Psoas muscle (tissue), 8 donors: ENCODE measurements at regions of chr15 and their contacts with region 1.

Region 1: DNA sequence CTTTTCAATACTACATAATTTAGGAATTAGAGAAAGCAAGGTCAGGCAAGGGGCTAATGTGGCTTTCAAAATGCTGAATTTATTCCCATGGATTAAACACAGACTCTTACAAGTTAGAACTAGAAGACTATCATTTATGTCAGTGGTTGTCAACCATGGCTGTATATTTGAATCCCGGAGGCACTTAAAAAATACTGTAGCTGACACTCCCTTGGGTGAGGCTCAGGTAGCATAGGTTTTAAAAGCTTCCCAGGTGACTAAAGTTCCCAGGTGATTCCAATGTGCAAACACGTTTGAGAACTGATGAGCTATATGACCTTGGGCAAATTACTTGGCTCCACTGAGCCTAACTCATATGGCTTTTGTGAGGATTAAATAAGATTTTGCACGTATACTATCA is 29.6 kb downstream of the AAGAB start:
- DNase-seq: no peak
- ATAC-seq: no peak
- H3K4me3 ChIP-seq: no peak overlapping the region
- H3K27ac ChIP-seq: no peak overlapping the region
- H3K4me1 ChIP-seq: no peaks in the 10 kb centered on the region
- H3K27me3 ChIP-seq: no peaks in the 10 kb centered on the region
- CTCF ChIP-seq: no peak

Region 2: GRCh38 chr15:65927545-65927944 is 1297.3 kb before region 1 on chr15:
- intact Hi-C with region 1: no loop called
- DNase-seq: no peak
- ATAC-seq: no peak
- H3K4me3 ChIP-seq: no peak overlapping the region
- H3K27ac ChIP-seq: no peak overlapping the region
- H3K4me1 ChIP-seq: no peaks in the 10 kb centered on the region
- H3K27me3 ChIP-seq: no peaks in the 10 kb centered on the region
- CTCF ChIP-seq: no peak

Region 3: GRCh38 chr15:66072616-66073361 is 1152.1 kb before region 1 on chr15:
- intact Hi-C with region 1: no loop called
- DNase-seq: no peak
- ATAC-seq: peak; percentile 33 to 77 (median 52)
- H3K4me3 ChIP-seq: no peak overlapping the region
- H3K27ac ChIP-seq: no peak overlapping the region
- H3K4me1 ChIP-seq: no peaks in the 10 kb centered on the region
- H3K27me3 ChIP-seq: no peaks in the 10 kb centered on the region
- CTCF ChIP-seq: no peak

Region 4: GRCh38 chr15:66951531-66952320 is 273.2 kb before region 1 on chr15:
- intact Hi-C with region 1: loop called in 1 of 2 experiments (anchors 5 kb)
- DNase-seq: no peak
- ATAC-seq: no peak
- H3K4me3 ChIP-seq: no peak overlapping the region
- H3K27ac ChIP-seq: no peak overlapping the region
- H3K4me1 ChIP-seq: peaks cover 4% of the 10 kb centered on the region
- H3K27me3 ChIP-seq: no peaks in the 10 kb centered on the region
- CTCF ChIP-seq: no peak